ENCODE measurements at regions of chr1 and their contacts with region 1.

Region 1: GRCh38 chr1:162056043-162056442 is 13.4 kb upstream of the NOS1AP start:
- DNase-seq: peak; percentile 83
- H3K4me3 ChIP-seq: no peak overlapping the region
- H3K27ac ChIP-seq: no peak overlapping the region
- H3K4me1 ChIP-seq: peaks cover 13% of the 10 kb centered on the region
- H3K27me3 ChIP-seq: no peaks in the 10 kb centered on the region
- CTCF ChIP-seq: peak; percentile 86 to 88
- POLR2A ChIP-seq: no peak

Region 2: DNA sequence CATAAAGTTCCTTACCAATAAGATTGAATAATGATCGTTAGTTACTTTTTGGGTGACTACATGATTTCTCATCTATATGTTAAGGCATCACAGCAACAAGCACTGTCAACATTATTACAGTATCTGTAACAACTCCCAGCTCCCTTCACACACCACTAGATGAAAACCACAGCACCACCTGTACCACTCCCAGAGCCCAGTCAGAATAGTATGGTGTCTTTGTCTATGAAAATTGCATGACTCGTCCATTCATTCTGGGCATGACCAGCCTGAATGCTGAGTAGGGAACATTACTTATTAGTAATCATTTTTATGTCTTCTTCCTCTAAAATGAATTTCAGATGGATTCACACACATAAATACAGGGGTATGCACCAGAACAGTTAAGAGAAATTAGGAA is 39.4 kb before region 1 on chr1:
- CTCF ChIA-PET with region 1: no interaction called
- POLR2A ChIA-PET with region 1: no interaction called
- dilution Hi-C with region 1: no loop called
- intact Hi-C with region 1: no loop called
- DNase-seq: no peak
- H3K4me3 ChIP-seq: no peak overlapping the region
- H3K27ac ChIP-seq: no peak overlapping the region
- H3K4me1 ChIP-seq: no peaks in the 10 kb centered on the region
- H3K27me3 ChIP-seq: peaks cover 14 to 15% of the 10 kb centered on the region in 2 experiments
- CTCF ChIP-seq: no peak
- POLR2A ChIP-seq: no peak

Region 3: DNA sequence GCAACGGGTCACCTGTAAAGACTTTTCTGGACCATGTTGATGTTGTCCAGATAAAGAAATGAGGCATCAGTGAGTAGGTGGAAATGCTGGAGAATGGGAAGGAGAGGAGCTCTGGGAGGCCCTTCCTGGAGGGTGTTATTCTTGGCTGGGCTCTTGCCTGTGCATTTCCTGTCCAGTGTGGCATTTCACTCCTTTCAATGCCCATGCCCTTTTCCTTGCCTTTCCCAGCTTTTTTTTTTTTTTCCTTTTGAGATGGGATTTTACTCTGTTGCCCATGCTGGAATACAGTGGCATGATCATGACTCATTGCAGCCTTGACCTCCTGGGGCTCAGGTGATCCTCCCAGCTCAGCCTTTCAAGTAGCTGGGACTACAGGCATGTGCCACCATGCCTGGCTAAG is 25.3 kb after region 1 on chr1:
- CTCF ChIA-PET with region 1: interaction called, 11 read pairs
- POLR2A ChIA-PET with region 1: no interaction called
- dilution Hi-C with region 1: no loop called
- intact Hi-C with region 1: no loop called
- DNase-seq: peak; percentile 79
- H3K4me3 ChIP-seq: no peak overlapping the region
- H3K27ac ChIP-seq: no peak overlapping the region
- H3K4me1 ChIP-seq: peaks cover 17% of the 10 kb centered on the region
- H3K27me3 ChIP-seq: no peaks in the 10 kb centered on the region
- CTCF ChIP-seq: no peak
- POLR2A ChIP-seq: no peak

Region 4: DNA sequence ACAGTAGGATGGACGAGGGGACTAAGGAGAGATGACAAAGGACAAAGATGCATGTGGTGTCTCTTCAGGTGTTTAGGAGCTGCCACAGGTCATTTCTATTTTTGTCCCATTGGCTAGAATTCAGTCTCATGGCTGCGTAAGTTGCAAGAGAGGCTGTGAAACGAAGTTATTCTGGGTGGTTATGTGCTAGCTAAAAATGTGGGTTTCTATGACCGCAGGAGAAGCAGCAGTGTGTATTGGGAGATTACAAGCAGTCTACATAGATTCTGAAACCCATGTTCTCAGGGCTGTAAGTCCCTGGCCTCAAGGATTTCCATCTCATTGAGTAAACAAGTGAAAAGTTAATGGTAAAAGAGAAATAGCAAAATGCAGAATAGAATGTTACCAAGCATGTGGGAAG is 209.9 kb after region 1 on chr1:
- CTCF ChIA-PET with region 1: interaction called, 10 read pairs
- POLR2A ChIA-PET with region 1: no interaction called
- dilution Hi-C with region 1: no loop called
- intact Hi-C with region 1: no loop called
- DNase-seq: no peak
- H3K4me3 ChIP-seq: no peak overlapping the region
- H3K27ac ChIP-seq: no peak overlapping the region
- H3K4me1 ChIP-seq: no peaks in the 10 kb centered on the region
- H3K27me3 ChIP-seq: no peaks in the 10 kb centered on the region
- CTCF ChIP-seq: no peak
- POLR2A ChIP-seq: no peak

Region 5: GRCh38 chr1:162349635-162350330 is 293.7 kb after region 1 on chr1:
- CTCF ChIA-PET with region 1: interaction called, 6 read pairs
- POLR2A ChIA-PET with region 1: no interaction called
- dilution Hi-C with region 1: no loop called
- intact Hi-C with region 1: loop called (anchors 1 kb)
- DNase-seq: peak; percentile 95
- H3K4me3 ChIP-seq: no peak overlapping the region
- H3K27ac ChIP-seq: peak overlapping the region; percentile 93
- H3K4me1 ChIP-seq: peaks cover 28% of the 10 kb centered on the region
- H3K27me3 ChIP-seq: no peaks in the 10 kb centered on the region
- CTCF ChIP-seq: no peak
- POLR2A ChIP-seq: peak; percentile 47

Region 6: GRCh38 chr1:162391790-162392563 is 335.9 kb after region 1 on chr1:
- CTCF ChIA-PET with region 1: interaction called, 51 read pairs
- POLR2A ChIA-PET with region 1: no interaction called
- dilution Hi-C with region 1: no loop called
- intact Hi-C with region 1: loop called (anchors 1 kb)
- DNase-seq: peak; percentile 43
- H3K4me3 ChIP-seq: no peak overlapping the region
- H3K27ac ChIP-seq: no peak overlapping the region
- H3K4me1 ChIP-seq: no peaks in the 10 kb centered on the region
- H3K27me3 ChIP-seq: peaks cover 0 to 6% of the 10 kb centered on the region in 2 experiments
- CTCF ChIP-seq: peak; percentile 64 to 70
- POLR2A ChIP-seq: no peak

Region 7: DNA sequence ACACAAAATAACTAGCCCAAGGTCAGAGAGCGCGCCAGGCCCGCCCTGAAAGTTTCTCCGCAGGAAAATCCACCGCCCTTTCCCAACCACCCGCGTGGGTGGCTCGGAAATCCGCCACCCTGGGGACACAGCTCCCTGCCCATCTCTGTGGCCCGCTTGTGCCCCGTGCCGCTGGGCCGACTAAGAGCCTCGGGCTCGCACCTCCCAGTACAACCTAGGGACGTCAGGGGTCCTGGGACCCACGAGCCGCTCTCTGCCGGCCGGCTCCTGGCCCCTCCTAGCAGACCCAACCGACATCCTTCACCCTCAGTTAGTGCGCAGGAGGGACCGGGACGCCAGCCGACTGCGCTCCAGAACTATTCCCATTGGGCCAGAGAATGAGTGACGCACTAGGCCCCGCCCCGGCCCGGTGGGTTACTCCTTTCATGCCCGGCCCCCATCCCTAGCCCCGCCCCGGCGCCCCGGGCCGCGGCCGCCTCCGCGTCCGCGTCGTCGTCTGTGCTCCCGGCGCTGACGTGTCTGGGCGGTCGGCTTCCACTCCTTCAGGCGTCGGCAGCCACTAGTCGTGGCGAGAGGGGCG is 505.1 kb after region 1 on chr1:
- CTCF ChIA-PET with region 1: interaction called, 3 read pairs
- POLR2A ChIA-PET with region 1: no interaction called
- dilution Hi-C with region 1: no loop called
- intact Hi-C with region 1: loop called (anchors 5 kb)
- DNase-seq: peak; percentile 98
- H3K4me3 ChIP-seq: peak overlapping the region; percentile 23 to 95 (median 34)
- H3K27ac ChIP-seq: peak overlapping the region; percentile 89
- H3K4me1 ChIP-seq: peaks cover 25% of the 10 kb centered on the region
- H3K27me3 ChIP-seq: no peaks in the 10 kb centered on the region
- CTCF ChIP-seq: no peak
- POLR2A ChIP-seq: no peak

Measured in endothelial cell of umbilical vein (primary cell).